Activated CD8-positive, alpha-beta T cell treated with anti-CD3 and anti-CD28 coated beads, Interleukin-2, amount 10 ng/mL, durations not matched to agents 7 days and 5 days (primary cell): ENCODE measurements at regions of chr7 and their contacts with region 1.

Region 1: GRCh38 chr7:129163875-129164544 is 19.5 kb downstream of the TSPAN33 start:
- DNase-seq: peak; percentile 52
- ATAC-seq: no peak
- H3K4me3 Mint-ChIP-seq: no peak overlapping the region
- H3K27ac Mint-ChIP-seq: no peak overlapping the region
- H3K4me1 Mint-ChIP-seq: peaks cover 11% of the 10 kb centered on the region
- H3K27me3 Mint-ChIP-seq: no peaks in the 10 kb centered on the region

Region 2: DNA sequence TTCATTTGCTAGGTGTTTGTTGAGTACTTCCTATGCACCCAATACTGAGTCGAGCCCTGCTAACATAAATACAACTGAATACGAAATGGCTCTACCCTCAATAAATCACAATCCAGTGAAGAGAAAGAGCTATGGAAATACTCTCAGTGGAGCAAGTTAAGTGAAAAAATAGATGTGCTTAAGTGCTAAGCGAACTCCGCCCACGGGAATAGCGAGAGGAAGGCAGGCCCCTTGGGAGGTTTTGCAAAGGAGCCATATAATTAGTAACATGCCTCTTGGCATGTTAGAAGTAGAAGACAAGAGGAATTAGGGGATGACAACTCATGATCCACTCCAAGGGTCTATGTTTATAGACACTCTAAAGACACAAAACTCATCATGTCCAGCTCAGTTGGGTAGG is 62.3 kb before region 1 on chr7:
- CTCF ChIA-PET with region 1: interaction called, 12 read pairs
- POLR2A ChIA-PET with region 1: no interaction called
- DNase-seq: no peak
- ATAC-seq: no peak
- H3K4me3 Mint-ChIP-seq: no peak overlapping the region
- H3K27ac Mint-ChIP-seq: no peak overlapping the region
- H3K4me1 Mint-ChIP-seq: no peaks in the 10 kb centered on the region
- H3K27me3 Mint-ChIP-seq: peaks cover 3% of the 10 kb centered on the region

Region 3: DNA sequence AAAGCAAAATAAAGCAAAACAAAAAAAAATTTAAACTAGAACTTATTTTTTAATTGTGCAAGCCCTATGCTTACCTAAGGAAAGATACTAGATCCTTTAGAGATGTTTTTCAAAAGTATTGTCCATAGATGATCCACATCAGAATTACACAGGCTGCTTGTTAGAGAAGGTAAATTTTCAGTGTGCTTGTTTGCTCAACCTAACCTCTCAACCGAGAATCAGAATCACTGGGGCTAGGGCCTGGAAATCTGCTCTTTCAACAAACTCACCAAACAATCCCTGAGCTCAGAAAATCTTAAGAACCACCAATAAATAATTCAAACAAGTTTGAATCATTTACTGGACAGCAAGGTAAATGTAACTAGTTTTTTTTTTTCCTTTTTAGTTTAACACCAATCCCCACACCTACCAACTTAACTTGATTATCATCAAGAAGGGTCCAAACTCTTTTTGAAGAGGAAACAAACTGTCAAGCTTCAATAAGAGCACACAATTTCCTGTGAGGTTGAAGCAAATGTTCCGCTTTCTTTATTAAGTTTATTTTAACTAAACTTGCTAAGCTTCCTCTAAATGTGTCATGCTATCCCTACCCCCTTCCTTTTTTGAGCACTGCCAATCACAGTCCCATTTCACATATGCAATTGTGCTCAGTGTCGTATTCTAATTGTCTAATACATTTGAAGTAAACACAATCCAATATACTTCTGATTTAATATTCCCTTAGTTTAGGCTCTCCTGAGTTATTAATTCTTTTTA is 26.9 kb before region 1 on chr7:
- CTCF ChIA-PET with region 1: interaction called, 18 read pairs
- POLR2A ChIA-PET with region 1: no interaction called
- DNase-seq: no peak
- ATAC-seq: peak; percentile 70
- H3K4me3 Mint-ChIP-seq: peak overlapping the region; percentile 32
- H3K27ac Mint-ChIP-seq: peak overlapping the region; percentile 85
- H3K4me1 Mint-ChIP-seq: peaks cover 24% of the 10 kb centered on the region
- H3K27me3 Mint-ChIP-seq: peaks cover 2% of the 10 kb centered on the region

Region 4: DNA sequence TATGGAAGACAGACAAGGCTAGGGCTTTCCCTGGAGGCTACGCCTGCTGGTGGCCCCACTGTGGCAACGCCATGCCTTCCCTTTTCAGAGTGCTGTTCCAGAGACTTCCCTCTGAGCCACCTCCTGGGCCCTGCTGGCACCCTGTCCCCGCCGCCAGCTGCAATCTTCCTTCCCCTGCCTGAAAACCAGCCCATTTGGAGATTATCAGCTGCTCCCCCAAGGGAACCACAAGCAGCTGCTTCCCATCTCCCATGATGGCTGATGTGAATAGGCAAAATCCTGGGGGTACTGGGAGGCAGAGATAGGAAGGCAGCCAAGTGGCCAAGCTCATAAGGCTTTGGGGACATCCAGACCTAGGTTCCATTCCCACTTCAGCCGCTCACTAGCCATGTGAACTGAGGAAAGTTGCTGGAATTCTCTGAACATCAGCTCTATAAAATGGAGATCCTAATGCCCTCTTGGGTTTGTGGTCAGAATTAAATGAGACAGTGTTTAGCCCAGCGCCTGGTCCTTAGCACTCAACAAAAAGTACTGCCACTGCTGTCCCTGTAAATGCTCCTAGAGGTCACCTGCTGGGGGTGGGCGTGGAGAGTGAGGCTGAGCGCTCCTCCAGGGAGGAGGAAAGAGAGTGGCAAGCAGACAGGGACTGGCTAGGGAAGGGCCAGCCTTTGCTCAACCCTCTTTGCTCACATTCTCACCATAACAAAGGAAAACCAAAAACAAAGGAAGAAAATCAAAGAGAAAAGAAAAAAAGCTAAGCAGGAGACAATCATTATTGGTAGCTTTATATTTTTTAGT is 13.6 kb before region 1 on chr7:
- CTCF ChIA-PET with region 1: interaction called, 33 read pairs
- POLR2A ChIA-PET with region 1: no interaction called
- DNase-seq: no peak
- ATAC-seq: no peak
- H3K4me3 Mint-ChIP-seq: no peak overlapping the region
- H3K27ac Mint-ChIP-seq: no peak overlapping the region
- H3K4me1 Mint-ChIP-seq: peaks cover 5% of the 10 kb centered on the region
- H3K27me3 Mint-ChIP-seq: peaks cover 4% of the 10 kb centered on the region

Region 5: GRCh38 chr7:129193892-129194291 is 29.9 kb after region 1 on chr7:
- CTCF ChIA-PET with region 1: interaction called, 16 read pairs
- POLR2A ChIA-PET with region 1: no interaction called
- DNase-seq: no peak
- ATAC-seq: no peak
- H3K4me3 Mint-ChIP-seq: no peak overlapping the region
- H3K27ac Mint-ChIP-seq: no peak overlapping the region
- H3K4me1 Mint-ChIP-seq: peaks cover 5% of the 10 kb centered on the region
- H3K27me3 Mint-ChIP-seq: peaks cover 38% of the 10 kb centered on the region

Region 6: GRCh38 chr7:129224251-129225205 is 60.5 kb after region 1 on chr7 and contains the start of gene AHCYL2:
- CTCF ChIA-PET with region 1: interaction called, 18 read pairs
- POLR2A ChIA-PET with region 1: interaction called, 3 read pairs
- DNase-seq: peak; percentile 98
- ATAC-seq: peak; percentile 95
- H3K4me3 Mint-ChIP-seq: peak within 1 kb of the TSS; percentile 85
- H3K27ac Mint-ChIP-seq: peak within 1 kb of the TSS; percentile 95
- H3K4me1 Mint-ChIP-seq: peaks cover 32% of the 10 kb centered on the region
- H3K27me3 Mint-ChIP-seq: no peaks in the 10 kb centered on the region
- total RNA-seq, gene AHCYL2: 7.3 to 7.6 TPM

Region 7: GRCh38 chr7:129423700-129424618 is 259.9 kb after region 1 on chr7:
- CTCF ChIA-PET with region 1: no interaction called
- POLR2A ChIA-PET with region 1: no interaction called
- DNase-seq: no peak
- ATAC-seq: no peak
- H3K4me3 Mint-ChIP-seq: no peak overlapping the region
- H3K27ac Mint-ChIP-seq: no peak overlapping the region
- H3K4me1 Mint-ChIP-seq: peaks cover 4% of the 10 kb centered on the region
- H3K27me3 Mint-ChIP-seq: no peaks in the 10 kb centered on the region